Activated T-helper 1 cell treated with anti-CD3 and anti-CD28 coated beads, Interleukin-12 subunit alpha, Interleukin-12 subunit beta, Interleukin-2, Interleukin-4 antibody, amounts not matched to agents 30 ng/mL and 10 ng/mL and 1 ng/mL, durations not matched to agents 14 hours and 24 hours and 36 hours (primary cell): ENCODE measurements at regions of chr21 and their contacts with region 1.

Region 1: DNA sequence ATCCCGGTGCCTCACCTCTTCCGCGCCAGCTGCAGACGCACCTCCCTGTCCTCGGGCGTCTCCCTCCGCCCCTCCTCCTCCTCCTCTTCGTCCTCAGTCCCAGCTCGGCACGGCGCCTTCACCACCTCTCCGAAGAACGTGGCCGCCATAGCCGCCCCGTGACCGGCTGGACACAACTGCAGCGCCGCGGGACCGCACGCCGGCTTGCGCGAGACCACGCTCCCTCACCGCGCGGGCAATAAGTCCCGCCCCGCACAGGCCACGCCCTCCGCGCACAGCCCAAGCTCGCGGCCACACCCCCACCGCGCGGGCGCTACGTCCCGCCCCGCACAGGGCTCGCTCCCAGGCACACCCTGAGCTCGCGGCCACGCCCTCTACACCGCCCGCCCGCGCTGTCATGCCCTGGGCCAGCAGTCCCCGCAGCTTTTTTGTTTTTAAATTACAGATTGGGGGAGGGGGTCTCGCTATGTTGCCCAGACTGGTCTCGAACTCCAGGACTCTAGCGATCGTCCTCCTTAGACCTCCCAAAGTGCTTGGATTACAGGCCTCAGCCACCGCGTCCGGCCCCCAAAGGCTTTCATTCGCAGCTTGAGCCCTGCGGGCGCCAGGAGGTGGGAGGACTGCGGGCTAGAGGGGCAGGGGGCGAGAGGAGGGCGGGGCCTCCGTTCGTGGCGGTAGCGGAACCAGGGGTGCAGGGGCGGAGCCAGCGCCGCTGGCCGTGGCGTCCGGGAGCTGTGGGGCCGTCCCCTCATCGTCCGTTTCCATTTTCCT is at the start of gene PSMG1:
- DNase-seq: peak; percentile 91
- H3K4me3 Mint-ChIP-seq: peak within 1 kb of the TSS; percentile 98
- H3K27ac Mint-ChIP-seq: peak within 1 kb of the TSS; percentile 98
- H3K4me1 Mint-ChIP-seq: peaks cover 55% of the 10 kb centered on the region
- H3K27me3 Mint-ChIP-seq: no peaks in the 10 kb centered on the region
- total RNA-seq, gene PSMG1: 102 and 103 TPM in 2 replicates

Region 2: DNA sequence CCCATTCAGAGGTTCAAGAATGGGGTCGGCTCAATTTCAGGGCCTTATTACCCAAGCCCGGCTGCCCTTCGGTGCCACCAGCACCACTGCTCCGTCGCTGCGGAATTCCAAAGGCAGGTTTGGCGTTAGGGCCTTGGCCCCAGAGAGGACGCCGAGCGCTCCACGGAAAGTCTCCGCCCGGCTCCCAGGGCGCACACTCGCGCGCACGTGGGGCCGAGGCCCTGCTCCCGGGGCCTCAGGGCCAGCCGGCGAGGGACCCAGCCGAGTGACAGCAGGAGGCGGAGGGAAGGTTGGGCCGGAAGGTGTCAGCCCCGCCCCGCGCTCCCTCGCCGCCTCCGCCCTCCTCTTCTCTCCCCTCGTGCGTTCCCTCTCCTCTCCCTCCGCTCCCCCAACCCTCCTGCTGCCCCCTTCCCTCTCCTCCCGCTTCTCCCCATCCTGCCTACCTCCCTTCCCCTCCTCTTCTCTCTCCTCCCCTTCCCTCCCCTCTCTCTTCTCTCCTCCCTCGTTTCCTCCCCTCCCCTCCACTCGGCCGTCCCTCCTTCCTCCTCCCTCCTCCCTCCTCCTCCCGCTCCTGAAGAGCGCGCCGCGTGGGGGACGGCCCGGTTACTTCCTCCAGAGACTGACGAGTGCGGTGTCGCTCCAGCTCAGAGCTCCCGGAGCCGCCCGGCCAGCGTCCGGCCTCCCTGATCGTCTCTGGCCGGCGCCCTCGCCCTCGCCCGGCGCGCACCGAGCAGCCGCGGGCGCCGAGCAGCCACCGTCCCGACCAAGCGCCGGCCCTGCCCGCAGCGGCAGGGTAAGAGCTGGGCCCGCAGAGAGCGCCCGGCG is 377.9 kb before region 1 on chr21 and contains the start of gene ETS2:
- intact Hi-C with region 1: loop called (anchors 1 kb)
- DNase-seq: peak; percentile 72
- H3K4me3 Mint-ChIP-seq: peak within 1 kb of the TSS; percentile 92
- H3K27ac Mint-ChIP-seq: peak within 1 kb of the TSS; percentile 90
- H3K4me1 Mint-ChIP-seq: peaks cover 27% of the 10 kb centered on the region
- H3K27me3 Mint-ChIP-seq: peaks cover 7% of the 10 kb centered on the region
- total RNA-seq, gene ETS2: 22.9 and 25.8 TPM in 2 replicates

Region 3: GRCh38 chr21:39217356-39218081 is 34.1 kb after region 1 on chr21:
- intact Hi-C with region 1: no loop called
- DNase-seq: no peak
- H3K4me3 Mint-ChIP-seq: no peak overlapping the region
- H3K27ac Mint-ChIP-seq: no peak overlapping the region
- H3K4me1 Mint-ChIP-seq: peaks cover 5% of the 10 kb centered on the region
- H3K27me3 Mint-ChIP-seq: no peaks in the 10 kb centered on the region

Region 4: GRCh38 chr21:39313571-39314142 is 130.2 kb after region 1 on chr21 and contains the start of gene BRWD1:
- intact Hi-C with region 1: loop called (anchors 1 kb)
- DNase-seq: peak; percentile 75
- H3K4me3 Mint-ChIP-seq: peak within 1 kb of the TSS; percentile 92
- H3K27ac Mint-ChIP-seq: peak within 1 kb of the TSS; percentile 97
- H3K4me1 Mint-ChIP-seq: peaks cover 31% of the 10 kb centered on the region
- H3K27me3 Mint-ChIP-seq: no peaks in the 10 kb centered on the region
- total RNA-seq, gene BRWD1: 34.7 and 38.1 TPM in 2 replicates

Region 5: GRCh38 chr21:39379986-39380891 is 196.8 kb after region 1 on chr21:
- intact Hi-C with region 1: loop called (anchors 1 kb)
- DNase-seq: peak; percentile 92
- H3K4me3 Mint-ChIP-seq: peak overlapping the region; percentile 94
- H3K27ac Mint-ChIP-seq: peak overlapping the region; percentile 91
- H3K4me1 Mint-ChIP-seq: peaks cover 45% of the 10 kb centered on the region
- H3K27me3 Mint-ChIP-seq: peaks cover 7% of the 10 kb centered on the region

Region 6: GRCh38 chr21:39445321-39446269 is 262.2 kb after region 1 on chr21 and contains the start of gene LCA5L:
- intact Hi-C with region 1: loop called (anchors 1 kb)
- DNase-seq: peak; percentile 90
- H3K4me3 Mint-ChIP-seq: peak within 1 kb of the TSS; percentile 93
- H3K27ac Mint-ChIP-seq: peak within 1 kb of the TSS; percentile 95
- H3K4me1 Mint-ChIP-seq: peaks cover 14% of the 10 kb centered on the region
- H3K27me3 Mint-ChIP-seq: peaks cover 33% of the 10 kb centered on the region
- total RNA-seq, gene LCA5L: not detected in 2 replicates